Sciatic nerve (tissue), 2 donors: ENCODE measurements at regions of chr1 and their contacts with region 1.

Region 1: DNA sequence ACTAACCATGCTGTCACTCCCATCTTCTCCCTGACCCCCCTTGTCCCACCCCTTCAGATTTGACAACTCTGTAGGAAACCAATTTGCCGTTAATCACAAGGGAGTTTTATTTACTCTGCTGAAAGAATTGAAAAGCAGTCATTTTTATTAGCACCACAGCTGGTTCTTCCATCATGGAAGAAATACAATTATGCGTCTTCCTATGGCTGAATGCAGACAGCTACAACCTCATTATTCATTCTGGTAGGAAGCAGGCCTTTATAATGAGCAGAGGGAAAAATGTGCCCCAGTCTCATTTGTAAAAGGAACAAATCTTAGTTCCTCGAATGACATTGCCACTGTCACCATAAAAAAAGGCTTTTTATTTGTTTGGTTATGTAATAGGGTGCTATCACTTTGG is 35.2 kb downstream of the JUN start:
- DNase-seq: no peak
- ATAC-seq: no peak

Region 2: GRCh38 chr1:58249737-58250586 is 498.7 kb before region 1 on chr1:
- intact Hi-C with region 1: loop called (anchors 5 kb)
- DNase-seq: no peak
- ATAC-seq: no peak

Region 3: GRCh38 chr1:59029411-59030145 is 280.9 kb after region 1 on chr1:
- intact Hi-C with region 1: no loop called
- DNase-seq: no peak
- ATAC-seq: no peak